GM12878 (cell line): ENCODE measurements at regions of chr20 and their contacts with region 1.

Region 1: GRCh38 chr20:61002090-61002489 is 250.0 kb upstream of the CDH4 start:
- DNase-seq: no peak
- ATAC-seq: no peak
- H3K4me3 ChIP-seq: no peak overlapping the region
- H3K27ac ChIP-seq: no peak overlapping the region
- H3K4me1 ChIP-seq: no peaks in the 10 kb centered on the region
- H3K27me3 ChIP-seq: no peaks in the 10 kb centered on the region
- CTCF ChIP-seq: no peak
- EP300 ChIP-seq: no peak
- POLR2A ChIP-seq: no peak
- RAD21 ChIP-seq: no peak

Region 2: DNA sequence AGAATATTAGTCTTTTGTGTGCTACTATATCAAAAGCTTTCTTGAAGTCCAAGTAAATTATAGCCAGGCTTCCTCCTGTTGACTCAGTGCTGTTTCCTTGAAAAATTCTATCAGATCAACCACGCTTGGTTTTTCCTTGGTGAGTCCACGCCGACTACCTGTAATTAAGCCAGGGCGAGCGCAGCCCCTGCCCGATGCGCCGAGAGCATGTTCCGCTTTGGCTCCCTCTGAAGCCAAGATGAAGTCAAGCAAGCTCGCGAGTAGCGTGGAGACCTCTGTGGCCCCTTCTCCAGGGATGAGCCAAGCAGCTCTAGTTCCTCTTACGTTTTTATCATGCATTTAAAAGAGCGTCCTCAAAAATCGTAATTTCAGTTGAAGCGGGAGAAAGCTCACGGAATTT is 402.7 kb before region 1 on chr20:
- CTCF ChIA-PET with region 1: no interaction called
- POLR2A ChIA-PET with region 1: no interaction called
- RAD21 ChIA-PET with region 1: no interaction called
- SMC1A ChIA-PET with region 1: no interaction called
- in situ Hi-C with region 1: no loop called
- intact Hi-C with region 1: no loop called
- DNase-seq: no peak
- ATAC-seq: no peak
- H3K4me3 ChIP-seq: no peak overlapping the region
- H3K27ac ChIP-seq: no peak overlapping the region
- H3K4me1 ChIP-seq: no peaks in the 10 kb centered on the region
- H3K27me3 ChIP-seq: no peaks in the 10 kb centered on the region
- CTCF ChIP-seq: no peak
- EP300 ChIP-seq: no peak
- POLR2A ChIP-seq: no peak
- RAD21 ChIP-seq: no peak

Region 3: DNA sequence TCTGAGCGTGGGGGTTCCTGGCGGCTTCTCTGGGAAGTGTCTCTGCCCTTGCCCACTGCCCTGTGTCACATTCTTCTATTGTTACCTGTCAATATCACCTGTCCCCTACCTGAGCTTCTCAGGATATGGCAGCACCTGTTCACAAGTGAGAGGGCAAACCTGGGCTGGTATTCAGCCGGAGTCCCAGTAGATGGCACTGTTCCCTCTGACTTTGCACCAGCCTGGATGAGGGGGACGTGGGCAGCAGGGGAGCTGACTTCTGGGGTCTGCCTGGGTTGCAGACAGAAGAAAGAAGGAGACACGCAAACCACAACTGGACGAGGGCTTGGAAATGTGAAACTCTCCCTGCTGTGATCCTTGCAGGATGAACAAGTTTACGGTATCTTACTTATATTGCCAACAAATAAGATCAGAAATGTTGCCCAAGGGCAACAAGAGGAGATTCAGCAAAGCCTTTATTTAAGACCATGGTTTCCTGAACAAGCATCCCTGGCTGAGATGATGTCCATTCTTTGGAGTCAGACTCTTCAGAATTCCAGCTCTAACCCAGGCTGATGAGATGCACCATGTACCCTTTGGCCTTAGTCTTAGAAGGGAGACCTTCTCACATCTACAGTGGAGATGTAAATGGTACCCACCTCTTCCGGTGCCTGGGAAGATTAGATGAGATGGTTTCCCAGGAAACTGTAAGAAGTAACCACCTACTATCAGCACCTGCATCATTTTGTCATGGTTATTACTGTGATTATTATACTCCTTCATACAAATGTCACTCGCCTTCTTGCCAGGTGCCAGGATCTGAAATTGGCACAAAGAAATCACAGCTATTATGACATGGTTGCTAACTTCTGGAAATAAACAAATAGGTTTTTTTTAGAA is 150.0 kb before region 1 on chr20:
- CTCF ChIA-PET with region 1: no interaction called
- POLR2A ChIA-PET with region 1: no interaction called
- RAD21 ChIA-PET with region 1: no interaction called
- SMC1A ChIA-PET with region 1: no interaction called
- in situ Hi-C with region 1: no loop called
- intact Hi-C with region 1: no loop called
- DNase-seq: no peak
- ATAC-seq: no peak
- H3K4me3 ChIP-seq: no peak overlapping the region
- H3K27ac ChIP-seq: no peak overlapping the region
- H3K4me1 ChIP-seq: no peaks in the 10 kb centered on the region
- H3K27me3 ChIP-seq: no peaks in the 10 kb centered on the region
- CTCF ChIP-seq: peak in 1 of 3 experiments; percentile 31; a peak in 1 of 6 replicates
- EP300 ChIP-seq: no peak
- POLR2A ChIP-seq: no peak
- RAD21 ChIP-seq: 0 out of 2 replicates have a peak, but pooled peaks have one; percentile 4

Region 4: DNA sequence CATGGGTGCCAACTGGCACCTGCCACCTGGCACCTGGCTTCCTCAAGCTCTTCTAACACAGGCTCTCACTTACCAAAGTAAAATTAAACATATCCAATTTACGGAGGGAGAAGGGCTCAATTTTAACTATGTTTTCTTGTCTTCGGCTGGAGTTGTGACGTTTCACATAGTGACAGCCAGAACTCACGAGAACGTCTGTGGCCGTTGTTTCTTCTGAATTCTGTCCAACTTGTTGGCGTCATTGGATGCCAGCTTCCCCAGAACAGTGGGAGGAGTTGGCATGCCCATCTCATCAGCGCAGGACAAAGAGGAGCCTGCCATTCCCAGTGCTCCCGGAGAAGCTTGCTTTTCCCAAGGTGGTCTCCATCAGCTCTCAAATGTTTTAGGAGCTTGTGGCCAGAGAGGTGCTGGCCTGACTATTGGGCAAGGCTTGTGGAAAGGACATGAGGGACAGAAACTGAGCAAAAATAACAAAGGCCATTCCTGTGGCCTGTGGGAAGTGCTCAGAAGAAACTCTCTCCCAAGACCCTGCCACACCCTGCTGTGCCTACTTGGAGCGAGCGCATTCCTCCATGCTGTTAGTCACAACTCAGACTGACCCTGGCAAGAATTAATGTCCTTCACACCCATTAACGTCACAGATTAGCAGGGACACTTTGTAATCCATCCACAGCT is 15.5 kb before region 1 on chr20:
- CTCF ChIA-PET with region 1: no interaction called
- POLR2A ChIA-PET with region 1: no interaction called
- RAD21 ChIA-PET with region 1: no interaction called
- SMC1A ChIA-PET with region 1: no interaction called
- in situ Hi-C with region 1: no loop called
- intact Hi-C with region 1: no loop called
- DNase-seq: no peak
- ATAC-seq: no peak
- H3K4me3 ChIP-seq: no peak overlapping the region
- H3K27ac ChIP-seq: no peak overlapping the region
- H3K4me1 ChIP-seq: no peaks in the 10 kb centered on the region
- H3K27me3 ChIP-seq: no peaks in the 10 kb centered on the region
- CTCF ChIP-seq: no peak
- EP300 ChIP-seq: no peak
- POLR2A ChIP-seq: no peak
- RAD21 ChIP-seq: no peak

Region 5: DNA sequence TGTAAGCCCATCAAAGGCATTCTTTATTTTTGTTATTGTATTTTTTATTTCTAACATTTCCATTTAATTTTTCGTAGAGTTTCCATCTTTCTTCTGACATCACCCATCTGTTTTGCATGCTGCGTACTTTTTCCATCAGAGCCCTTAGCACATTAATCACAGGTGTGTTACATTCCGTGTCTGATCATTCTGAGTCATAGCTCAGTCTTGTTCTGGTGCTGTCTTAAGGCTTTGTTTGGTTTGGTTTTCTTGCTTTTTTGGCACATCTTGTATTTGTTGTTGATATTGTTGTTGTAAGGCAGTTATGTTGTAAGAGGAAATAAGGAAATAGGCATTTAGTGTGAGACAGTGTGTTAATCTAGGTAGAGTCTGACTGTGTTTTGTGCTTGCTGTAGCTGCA is 35.4 kb after region 1 on chr20:
- CTCF ChIA-PET with region 1: no interaction called
- POLR2A ChIA-PET with region 1: no interaction called
- RAD21 ChIA-PET with region 1: no interaction called
- SMC1A ChIA-PET with region 1: no interaction called
- in situ Hi-C with region 1: loop called (anchors 5 kb)
- intact Hi-C with region 1: no loop called
- DNase-seq: no peak
- ATAC-seq: no peak
- H3K4me3 ChIP-seq: no peak overlapping the region
- H3K27ac ChIP-seq: no peak overlapping the region
- H3K4me1 ChIP-seq: no peaks in the 10 kb centered on the region
- H3K27me3 ChIP-seq: no peaks in the 10 kb centered on the region
- CTCF ChIP-seq: no peak
- EP300 ChIP-seq: no peak
- POLR2A ChIP-seq: no peak
- RAD21 ChIP-seq: no peak